ENCODE measurements at regions of chr3 and their contacts with region 1.

Region 1: DNA sequence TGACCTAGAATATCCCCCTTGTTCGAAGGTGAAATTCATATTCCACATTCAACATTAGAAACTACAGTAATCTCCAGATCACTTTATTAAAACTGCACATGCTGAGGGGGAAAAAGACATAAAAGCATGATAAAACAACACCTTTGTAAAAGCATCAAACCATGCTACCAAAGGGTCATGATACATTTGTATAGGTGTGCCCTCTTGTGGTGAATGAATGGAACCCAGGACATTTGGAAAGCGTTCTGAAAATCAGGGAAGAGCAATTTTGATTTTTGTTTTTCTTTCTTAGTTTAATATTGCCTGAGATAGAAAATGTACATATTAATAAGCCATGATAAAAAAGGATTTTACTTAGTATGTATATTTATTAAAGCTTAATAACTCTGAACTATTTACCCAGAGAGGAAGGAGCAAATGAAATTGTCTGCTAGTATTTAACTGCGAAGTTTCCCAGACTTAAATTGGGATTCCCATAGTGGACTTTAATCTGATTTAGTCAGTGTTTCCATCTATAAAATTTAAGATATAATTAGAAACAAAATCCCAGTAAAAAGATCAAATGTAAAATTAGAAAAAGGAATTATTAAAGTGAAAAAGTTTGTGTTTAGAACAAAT is 105.8 kb upstream of the ARL6 start:
- DNase-seq: no peak
- H3K4me3 Mint-ChIP-seq: no peak overlapping the region
- H3K27ac Mint-ChIP-seq: no peak overlapping the region
- H3K4me1 Mint-ChIP-seq: no peaks in the 10 kb centered on the region
- H3K27me3 Mint-ChIP-seq: peaks cover 3% of the 10 kb centered on the region

Region 2: GRCh38 chr3:96863129-96863740 is 795.5 kb before region 1 on chr3:
- CTCF ChIA-PET with region 1: no interaction called
- intact Hi-C with region 1: loop called (anchors 1 kb)
- DNase-seq: peak; percentile 36
- H3K4me3 Mint-ChIP-seq: no peak overlapping the region
- H3K27ac Mint-ChIP-seq: no peak overlapping the region
- H3K4me1 Mint-ChIP-seq: no peaks in the 10 kb centered on the region
- H3K27me3 Mint-ChIP-seq: no peaks in the 10 kb centered on the region

Region 3: GRCh38 chr3:97550408-97550807 is 108.4 kb before region 1 on chr3:
- CTCF ChIA-PET with region 1: no interaction called
- intact Hi-C with region 1: no loop called
- DNase-seq: no peak
- H3K4me3 Mint-ChIP-seq: no peak overlapping the region
- H3K27ac Mint-ChIP-seq: no peak overlapping the region
- H3K4me1 Mint-ChIP-seq: no peaks in the 10 kb centered on the region
- H3K27me3 Mint-ChIP-seq: no peaks in the 10 kb centered on the region

Region 4: DNA sequence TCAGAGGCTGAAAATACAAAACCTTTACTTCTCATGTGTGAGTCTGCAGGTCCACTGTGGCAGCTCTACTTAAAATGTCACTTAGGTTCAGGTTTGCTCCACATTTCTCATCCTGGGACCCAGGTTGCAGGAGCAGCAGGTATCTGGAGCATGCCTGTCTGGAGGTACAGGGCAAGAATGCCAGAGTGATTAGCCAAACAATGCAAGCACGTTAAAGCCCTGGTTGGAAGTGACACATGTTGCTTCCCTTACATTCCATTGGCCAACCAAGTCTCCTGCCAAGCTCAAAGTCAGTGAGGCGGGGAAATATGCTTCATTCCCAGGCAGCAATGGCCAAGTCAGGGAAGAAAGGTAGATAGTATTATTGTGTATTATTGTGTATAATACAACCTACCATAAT is 29.0 kb after region 1 on chr3:
- CTCF ChIA-PET with region 1: no interaction called
- intact Hi-C with region 1: no loop called
- DNase-seq: no peak
- H3K4me3 Mint-ChIP-seq: no peak overlapping the region
- H3K27ac Mint-ChIP-seq: no peak overlapping the region
- H3K4me1 Mint-ChIP-seq: no peaks in the 10 kb centered on the region
- H3K27me3 Mint-ChIP-seq: no peaks in the 10 kb centered on the region